Activated CD4-positive, alpha-beta memory T cell treated with anti-CD3 and anti-CD28 coated beads for 36 hours (primary cell): ENCODE measurements at regions of chr5 and their contacts with region 1.

Region 1: DNA sequence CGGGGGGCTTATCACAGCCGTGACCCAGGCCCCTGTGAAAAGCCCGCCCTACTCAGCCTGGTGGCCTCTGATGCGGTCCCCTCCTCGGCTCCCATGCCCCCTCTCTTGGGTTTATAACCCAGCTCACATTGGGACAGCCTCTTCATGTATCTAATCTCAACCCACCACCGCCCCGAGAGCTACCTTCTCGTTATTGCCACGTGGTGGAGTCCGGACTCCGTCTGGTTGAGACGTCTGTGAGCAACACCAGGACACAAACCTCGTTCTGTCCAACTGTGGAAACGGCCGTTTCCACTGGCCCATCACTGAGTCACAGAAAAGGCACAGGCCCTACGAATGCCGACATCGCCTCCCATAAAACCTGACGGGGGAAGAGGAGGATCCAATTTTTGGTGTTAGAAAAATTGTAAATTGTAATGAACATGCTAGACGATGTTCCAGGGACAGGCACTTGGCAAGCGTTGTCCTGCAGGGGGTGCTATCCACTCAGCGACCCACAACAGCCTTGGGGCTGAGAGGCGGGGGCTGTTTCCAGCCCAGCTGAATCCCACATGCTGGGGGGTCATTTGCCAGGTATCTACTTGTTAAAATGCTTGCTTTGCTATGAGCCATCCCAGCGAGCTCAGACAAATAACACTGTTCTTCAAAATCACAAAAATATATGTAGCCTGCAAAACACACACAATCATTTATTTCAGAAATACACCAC is 37.3 kb upstream of the N4BP3 start:
- DNase-seq: peak; percentile 85
- H3K4me3 Mint-ChIP-seq: peak overlapping the region; percentile 44
- H3K27ac Mint-ChIP-seq: no peak overlapping the region
- H3K4me1 Mint-ChIP-seq: no peaks in the 10 kb centered on the region
- H3K27me3 Mint-ChIP-seq: peaks cover 8% of the 10 kb centered on the region

Region 2: GRCh38 chr5:178090858-178091540 is 15.0 kb after region 1 on chr5:
- CTCF ChIA-PET with region 1: interaction called, 20 read pairs
- POLR2A ChIA-PET with region 1: no interaction called
- intact Hi-C with region 1: no loop called
- DNase-seq: peak; percentile 33
- H3K4me3 Mint-ChIP-seq: no peak overlapping the region
- H3K27ac Mint-ChIP-seq: no peak overlapping the region
- H3K4me1 Mint-ChIP-seq: peaks cover 15% of the 10 kb centered on the region
- H3K27me3 Mint-ChIP-seq: peaks cover 2% of the 10 kb centered on the region

Region 3: GRCh38 chr5:178130604-178131485 is 54.9 kb after region 1 on chr5 and contains the start of gene RMND5B:
- CTCF ChIA-PET with region 1: interaction called, 16 read pairs
- POLR2A ChIA-PET with region 1: no interaction called
- intact Hi-C with region 1: no loop called
- DNase-seq: peak; percentile 89
- H3K4me3 Mint-ChIP-seq: peak within 1 kb of the TSS; percentile 82
- H3K27ac Mint-ChIP-seq: peak within 1 kb of the TSS; percentile 81
- H3K4me1 Mint-ChIP-seq: peaks cover 21% of the 10 kb centered on the region
- H3K27me3 Mint-ChIP-seq: no peaks in the 10 kb centered on the region
- total RNA-seq, gene RMND5B: 32.0 to 34.9 TPM

Region 4: DNA sequence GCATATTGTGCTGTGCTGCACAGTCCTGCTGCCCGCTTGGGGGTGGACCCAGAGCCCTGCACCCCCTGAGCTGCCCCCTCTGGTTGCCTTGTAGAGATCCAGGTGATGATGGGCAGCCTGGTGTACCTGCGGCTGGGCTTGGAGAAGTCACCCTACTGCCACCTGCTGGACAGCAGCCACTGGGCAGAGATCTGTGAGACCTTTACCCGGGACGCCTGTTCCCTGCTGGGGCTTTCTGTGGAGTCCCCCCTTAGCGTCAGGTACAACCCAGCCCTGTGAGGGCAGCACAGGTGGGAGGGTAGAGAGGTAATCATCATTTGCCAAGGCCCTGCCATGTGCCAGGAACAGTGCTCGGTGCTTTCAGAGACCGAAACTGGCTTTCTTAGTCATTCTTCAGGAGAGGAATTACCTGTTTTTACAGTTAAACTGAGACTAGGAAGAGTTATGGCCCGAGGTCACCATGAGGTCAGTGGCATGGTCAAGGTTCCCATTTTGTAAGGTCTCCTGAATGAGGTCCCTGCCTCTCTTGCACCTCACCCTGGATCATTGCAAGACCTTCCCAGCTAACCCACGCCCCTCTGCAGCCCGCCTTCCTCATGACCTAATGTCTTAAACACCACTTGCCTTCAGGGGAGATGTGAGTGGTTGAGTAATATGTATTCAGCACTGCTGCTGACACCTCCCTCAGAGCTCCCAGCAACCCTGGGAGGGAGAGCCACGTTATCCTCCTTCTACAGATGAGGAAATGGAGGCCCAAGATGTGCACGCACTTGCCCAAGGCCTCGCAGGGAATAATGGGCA is 70.2 kb after region 1 on chr5:
- CTCF ChIA-PET with region 1: interaction called, 117 read pairs
- POLR2A ChIA-PET with region 1: interaction called, 3 read pairs
- intact Hi-C with region 1: loop called (anchors 1 kb)
- DNase-seq: peak; percentile 80
- H3K4me3 Mint-ChIP-seq: no peak overlapping the region
- H3K27ac Mint-ChIP-seq: peak overlapping the region; percentile 56
- H3K4me1 Mint-ChIP-seq: peaks cover 42% of the 10 kb centered on the region
- H3K27me3 Mint-ChIP-seq: no peaks in the 10 kb centered on the region

Region 5: GRCh38 chr5:178163772-178164735 is 88.1 kb after region 1 on chr5:
- CTCF ChIA-PET with region 1: interaction called, 73 read pairs
- POLR2A ChIA-PET with region 1: no interaction called
- intact Hi-C with region 1: loop called (anchors 1 kb)
- DNase-seq: peak; percentile 94
- H3K4me3 Mint-ChIP-seq: peak overlapping the region; percentile 23
- H3K27ac Mint-ChIP-seq: no peak overlapping the region
- H3K4me1 Mint-ChIP-seq: peaks cover 5% of the 10 kb centered on the region
- H3K27me3 Mint-ChIP-seq: peaks cover 11% of the 10 kb centered on the region